Activated naive CD4-positive, alpha-beta T cell treated with anti-CD3 and anti-CD28 coated beads for 36 hours (primary cell): ENCODE measurements at regions of chr5 and their contacts with region 1.

Region 1: GRCh38 chr5:126736141-126736540 is 40.8 kb upstream of the LMNB1 start:
- DNase-seq: no peak
- H3K4me3 Mint-ChIP-seq: no peak overlapping the region
- H3K27ac Mint-ChIP-seq: no peak overlapping the region
- H3K4me1 Mint-ChIP-seq: peaks cover 4% of the 10 kb centered on the region
- H3K27me3 Mint-ChIP-seq: peaks cover 3% of the 10 kb centered on the region

Region 2: GRCh38 chr5:126234563-126235195 is 501.5 kb before region 1 on chr5:
- CTCF ChIA-PET with region 1: no interaction called
- intact Hi-C with region 1: no loop called
- DNase-seq: no peak
- H3K4me3 Mint-ChIP-seq: no peak overlapping the region
- H3K27ac Mint-ChIP-seq: no peak overlapping the region
- H3K4me1 Mint-ChIP-seq: no peaks in the 10 kb centered on the region
- H3K27me3 Mint-ChIP-seq: no peaks in the 10 kb centered on the region

Region 3: GRCh38 chr5:126253406-126253805 is 482.7 kb before region 1 on chr5:
- CTCF ChIA-PET with region 1: no interaction called
- intact Hi-C with region 1: no loop called
- DNase-seq: no peak
- H3K4me3 Mint-ChIP-seq: no peak overlapping the region
- H3K27ac Mint-ChIP-seq: no peak overlapping the region
- H3K4me1 Mint-ChIP-seq: no peaks in the 10 kb centered on the region
- H3K27me3 Mint-ChIP-seq: no peaks in the 10 kb centered on the region

Region 4: GRCh38 chr5:126686451-126687126 is 49.6 kb before region 1 on chr5:
- CTCF ChIA-PET with region 1: interaction called, 8 read pairs
- intact Hi-C with region 1: loop called (anchors 2 kb)
- DNase-seq: no peak
- H3K4me3 Mint-ChIP-seq: no peak overlapping the region
- H3K27ac Mint-ChIP-seq: no peak overlapping the region
- H3K4me1 Mint-ChIP-seq: peaks cover 37% of the 10 kb centered on the region
- H3K27me3 Mint-ChIP-seq: no peaks in the 10 kb centered on the region